Lower lobe of right lung (tissue), 2 donors: ENCODE measurements at regions of chr22 and their contacts with region 1.

Region 1: GRCh38 chr22:46116491-46116958 is 33.8 kb upstream of the PPARA start:
- DNase-seq: peak; percentile 94
- ATAC-seq: peak; percentile 91 to 92
- H3K4me3 ChIP-seq: no peak overlapping the region
- H3K27ac ChIP-seq: peak overlapping the region; percentile 65
- H3K4me1 ChIP-seq: peaks cover 37% of the 10 kb centered on the region
- H3K27me3 ChIP-seq: no peaks in the 10 kb centered on the region
- CTCF ChIP-seq: peak; percentile 74

Region 2: GRCh38 chr22:46006379-46007002 is 110.0 kb before region 1 on chr22:
- intact Hi-C with region 1: loop called (anchors 10 kb)
- DNase-seq: peak; percentile 95
- ATAC-seq: peak; percentile 89 to 93
- H3K4me3 ChIP-seq: peak overlapping the region; percentile 44
- H3K27ac ChIP-seq: peak overlapping the region; percentile 94
- H3K4me1 ChIP-seq: peaks cover 50% of the 10 kb centered on the region
- H3K27me3 ChIP-seq: no peaks in the 10 kb centered on the region
- CTCF ChIP-seq: peak; percentile 94